Activated CD8-positive, alpha-beta T cell treated with anti-CD3 and anti-CD28 coated beads for 36 hours (primary cell): ENCODE measurements at regions of chr17 and their contacts with region 1.

Region 1: GRCh38 chr17:73987845-73988509 is 215.5 kb upstream of the RPL38 start:
- DNase-seq: no peak
- ATAC-seq: no peak
- H3K4me3 Mint-ChIP-seq: no peak overlapping the region
- H3K27ac Mint-ChIP-seq: no peak overlapping the region
- H3K4me1 Mint-ChIP-seq: peaks cover 9% of the 10 kb centered on the region
- H3K27me3 Mint-ChIP-seq: no peaks in the 10 kb centered on the region
- CTCF ChIP-seq: no peak

Region 2: DNA sequence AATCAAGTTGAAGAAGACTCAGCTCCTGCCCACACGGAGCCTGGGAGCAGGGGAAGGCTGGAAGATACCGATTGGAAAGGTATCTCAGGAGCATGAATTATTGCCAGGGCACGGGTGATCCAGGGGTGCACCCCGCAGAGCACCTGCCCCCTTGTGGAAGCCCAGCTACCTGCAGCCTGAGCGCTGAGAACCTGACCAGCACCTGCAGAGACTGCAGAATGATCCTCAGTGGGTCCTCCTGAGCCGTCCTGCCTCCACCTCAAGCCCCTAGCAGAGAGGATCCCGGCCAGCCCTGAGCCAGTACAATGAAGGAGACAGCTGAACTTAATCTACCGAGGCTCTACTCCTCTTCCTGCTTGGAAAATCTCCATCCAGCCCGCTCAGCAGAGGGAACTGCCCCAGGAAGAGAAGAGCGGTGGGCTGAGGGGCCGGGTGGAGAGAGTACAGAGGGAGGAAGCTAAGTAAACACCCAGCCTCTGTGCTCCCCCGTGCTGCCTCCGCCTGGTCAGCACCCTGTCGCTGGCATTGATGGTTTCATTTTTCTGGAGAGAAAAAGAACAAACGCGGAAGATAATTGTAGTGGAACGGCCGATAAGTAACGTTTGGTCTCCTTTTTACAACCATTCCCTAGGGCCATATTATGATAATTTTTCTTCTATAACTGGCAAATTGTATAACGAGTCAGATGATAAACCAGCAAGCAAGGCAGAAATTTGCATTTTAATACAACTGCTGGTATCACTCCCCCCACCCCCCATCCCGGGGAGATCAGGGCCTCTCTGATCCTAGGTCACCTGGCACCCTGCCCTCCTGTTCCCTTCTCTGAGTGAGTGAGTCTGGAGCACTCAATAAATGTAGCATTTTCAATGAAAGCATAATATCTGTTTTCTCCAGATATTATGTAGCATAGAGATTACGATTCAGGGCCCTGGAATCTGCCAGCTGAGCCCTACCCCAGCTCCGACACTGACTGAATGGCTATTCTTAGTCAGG is 11.0 kb after region 1 on chr17:
- CTCF ChIA-PET with region 1: interaction called, 12 read pairs
- POLR2A ChIA-PET with region 1: no interaction called
- intact Hi-C with region 1: no loop called
- DNase-seq: peak; percentile 74
- ATAC-seq: peak; percentile 83
- H3K4me3 Mint-ChIP-seq: no peak overlapping the region
- H3K27ac Mint-ChIP-seq: no peak overlapping the region
- H3K4me1 Mint-ChIP-seq: no peaks in the 10 kb centered on the region
- H3K27me3 Mint-ChIP-seq: peaks cover 5% of the 10 kb centered on the region
- CTCF ChIP-seq: peak; percentile 78